Head of caudate nucleus (tissue), 42 donors: ENCODE measurements at regions of chr6 and their contacts with region 1.

Region 1: GRCh38 chr6:43769526-43770416 is at the start of gene VEGFA:
- DNase-seq: peak; percentile 84 to 97 (median 93)

Region 2: GRCh38 chr6:43604174-43604573 is 165.6 kb before region 1 on chr6:
- intact Hi-C with region 1: no loop called
- DNase-seq: no peak

Region 3: DNA sequence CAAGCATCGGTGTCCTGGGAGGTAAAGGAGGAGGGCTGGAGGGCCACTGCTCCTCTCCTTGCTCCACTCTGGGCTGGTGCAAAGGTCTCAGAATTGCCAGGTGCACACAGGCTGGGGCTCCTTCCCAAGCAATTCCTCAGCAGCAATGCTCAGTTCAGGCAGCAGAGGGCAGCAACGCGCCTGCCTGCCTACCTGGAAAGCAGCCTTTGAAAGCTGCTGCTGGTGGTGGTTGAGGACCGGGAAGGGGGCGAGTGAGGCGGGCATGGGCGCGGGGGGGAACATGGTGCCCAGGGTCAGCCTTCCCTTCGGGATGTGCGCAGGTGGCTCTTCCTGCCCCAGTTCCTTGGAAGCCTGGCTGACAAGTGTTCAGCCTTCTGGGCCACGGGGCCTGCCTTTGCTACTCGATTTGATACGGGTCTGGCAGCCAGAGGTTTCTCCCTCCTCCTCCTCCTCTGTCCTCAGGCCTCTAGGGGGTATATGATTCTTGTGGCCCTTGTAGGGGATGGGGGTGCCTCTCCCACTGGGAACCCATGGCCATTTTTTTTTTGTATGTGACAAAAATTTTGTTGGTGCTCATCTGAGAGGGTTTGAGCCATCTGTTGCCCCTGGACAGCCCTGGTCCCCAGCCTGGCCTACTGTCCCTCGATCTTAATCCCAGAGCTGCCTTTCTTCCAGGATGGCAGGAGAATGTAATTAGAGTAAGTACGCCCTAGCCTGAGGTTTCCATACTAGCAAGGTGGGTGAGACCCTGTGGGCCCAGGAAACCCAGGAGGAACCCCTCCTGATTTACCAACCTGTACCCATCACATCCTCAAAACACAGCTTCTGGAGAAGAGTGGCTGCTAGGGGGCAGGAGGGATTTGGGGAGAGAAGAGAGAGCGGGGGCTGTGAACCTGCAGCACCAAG is 102.3 kb before region 1 on chr6:
- intact Hi-C with region 1: loop called (anchors 5 kb)
- DNase-seq: peak; percentile 75 to 94 (median 89)

Region 4: GRCh38 chr6:44002593-44003344 is 233.0 kb after region 1 on chr6:
- intact Hi-C with region 1: loop called (anchors 10 kb)
- DNase-seq: peak; percentile 27 to 90 (median 71)

Region 5: GRCh38 chr6:44074439-44075136 is 304.8 kb after region 1 on chr6:
- intact Hi-C with region 1: loop called (anchors 2 kb)
- DNase-seq: peak; percentile 56 to 90 (median 80)